Psoas muscle (tissue), 8 donors: ENCODE measurements at regions of chr1 and their contacts with region 1.

Region 1: DNA sequence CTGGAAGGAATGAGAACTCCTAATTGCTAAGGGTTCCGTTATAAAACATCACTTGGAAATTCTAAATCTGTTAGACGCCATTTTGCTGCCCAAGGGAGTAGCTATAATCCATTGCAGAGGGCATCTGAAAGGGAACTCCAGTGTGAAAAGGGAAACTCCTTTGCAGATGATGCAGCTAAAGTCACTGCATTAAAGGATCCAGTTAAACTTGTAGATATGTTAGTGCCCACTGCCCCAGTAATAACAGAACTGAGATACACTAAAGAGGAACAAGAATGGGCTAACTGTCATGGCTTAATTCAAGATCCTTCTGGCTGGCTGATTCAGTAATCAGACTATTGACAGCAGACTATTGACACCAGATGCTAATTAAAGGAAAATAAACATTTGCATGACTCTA is 81.8 kb upstream of the KIAA0040 start:
- DNase-seq: no peak
- ATAC-seq: no peak
- H3K4me3 ChIP-seq: no peak overlapping the region
- H3K27ac ChIP-seq: no peak overlapping the region
- H3K4me1 ChIP-seq: peaks cover 20% of the 10 kb centered on the region
- H3K27me3 ChIP-seq: no peaks in the 10 kb centered on the region
- CTCF ChIP-seq: no peak

Region 2: DNA sequence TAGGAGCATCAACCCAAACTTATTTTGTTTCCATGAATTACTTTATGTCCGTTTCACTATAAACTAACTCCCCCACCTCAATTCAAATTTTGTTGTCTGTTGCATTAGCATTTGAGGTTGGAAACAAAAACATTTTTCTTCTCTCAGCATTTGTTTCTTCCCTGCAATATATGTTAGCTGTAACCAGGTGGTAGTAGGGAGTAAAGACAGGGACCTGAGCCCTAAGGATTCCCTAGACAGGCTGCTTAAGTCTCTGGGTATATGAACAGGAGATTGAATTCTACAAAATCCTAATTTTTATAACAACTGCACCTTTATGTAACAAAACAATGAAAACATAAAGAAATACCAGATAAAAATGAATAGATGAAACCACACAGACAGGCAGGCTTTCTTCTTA is 1431.2 kb after region 1 on chr1:
- intact Hi-C with region 1: loop called in 1 of 2 experiments (anchors 5 kb)
- DNase-seq: no peak
- ATAC-seq: no peak
- H3K4me3 ChIP-seq: no peak overlapping the region
- H3K27ac ChIP-seq: no peak overlapping the region
- H3K4me1 ChIP-seq: no peaks in the 10 kb centered on the region
- H3K27me3 ChIP-seq: no peaks in the 10 kb centered on the region
- CTCF ChIP-seq: no peak

Region 3: GRCh38 chr1:176843352-176844297 is 1569.3 kb after region 1 on chr1:
- intact Hi-C with region 1: loop called in 1 of 2 experiments (anchors 10 kb)
- DNase-seq: peak in 1 of 2 donors; percentile 13
- ATAC-seq: peak; percentile 52 to 71 (median 59)
- H3K4me3 ChIP-seq: no peak overlapping the region
- H3K27ac ChIP-seq: no peak overlapping the region
- H3K4me1 ChIP-seq: no peaks in the 10 kb centered on the region
- H3K27me3 ChIP-seq: no peaks in the 10 kb centered on the region
- CTCF ChIP-seq: peak; percentile 72